A673 (cell line): ENCODE measurements at regions of chr9 and their contacts with region 1.

Region 1: DNA sequence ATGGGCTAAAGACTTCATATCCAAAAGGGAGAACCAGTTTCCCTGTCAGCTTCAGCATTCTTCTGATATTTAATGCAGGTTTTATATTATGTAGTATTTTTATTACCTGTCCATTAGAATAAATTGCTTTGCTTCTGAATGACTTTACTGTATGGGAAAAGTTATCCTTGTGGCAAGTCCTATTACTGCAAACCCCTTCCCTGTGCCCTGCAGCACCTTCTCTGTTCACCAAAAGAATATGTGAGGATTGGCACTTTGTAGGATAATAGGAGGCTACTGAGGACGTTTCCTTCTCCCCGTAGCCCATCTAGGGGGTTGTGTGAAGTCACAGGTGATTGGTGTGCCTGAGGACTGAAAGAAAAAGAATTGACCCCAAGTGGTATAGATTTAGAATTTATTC is 296.1 kb downstream of the KDM4C start:
- DNase-seq: no peak
- H3K4me3 ChIP-seq: no peak overlapping the region
- H3K27ac ChIP-seq: no peak overlapping the region
- H3K4me1 ChIP-seq: peaks cover 3% of the 10 kb centered on the region
- H3K27me3 ChIP-seq: no peaks in the 10 kb centered on the region
- CTCF ChIP-seq: no peak; the same call in 1 of the 2 replicates

Region 2: DNA sequence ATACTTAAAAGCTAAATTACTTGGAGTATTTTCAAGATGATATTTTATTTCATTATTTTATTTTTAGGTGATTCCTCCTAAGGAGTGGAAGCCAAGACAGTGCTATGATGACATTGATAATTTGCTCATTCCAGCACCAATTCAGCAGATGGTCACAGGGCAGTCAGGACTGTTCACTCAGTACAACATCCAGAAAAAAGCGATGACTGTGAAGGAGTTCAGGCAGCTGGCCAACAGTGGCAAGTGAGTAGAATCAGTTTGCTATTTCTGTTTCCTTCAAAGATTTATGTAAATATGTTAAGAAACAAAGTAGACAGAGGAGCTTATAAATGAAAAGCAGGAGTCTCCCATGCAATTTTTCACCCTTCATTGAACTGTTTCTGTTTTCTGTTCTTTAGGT is 248.4 kb before region 1 on chr9:
- CTCF ChIA-PET with region 1: no interaction called
- POLR2A ChIA-PET with region 1: no interaction called
- intact Hi-C with region 1: no loop called
- DNase-seq: no peak
- H3K4me3 ChIP-seq: no peak overlapping the region
- H3K27ac ChIP-seq: no peak overlapping the region
- H3K4me1 ChIP-seq: no peaks in the 10 kb centered on the region
- H3K27me3 ChIP-seq: no peaks in the 10 kb centered on the region
- CTCF ChIP-seq: no peak

Region 3: GRCh38 chr9:6827439-6827838 is 226.5 kb before region 1 on chr9:
- CTCF ChIA-PET with region 1: no interaction called
- POLR2A ChIA-PET with region 1: no interaction called
- intact Hi-C with region 1: loop called (anchors 5 kb)
- DNase-seq: peak; percentile 69
- H3K4me3 ChIP-seq: no peak overlapping the region
- H3K27ac ChIP-seq: no peak overlapping the region
- H3K4me1 ChIP-seq: no peaks in the 10 kb centered on the region
- H3K27me3 ChIP-seq: no peaks in the 10 kb centered on the region
- CTCF ChIP-seq: peak; percentile 76

Region 4: GRCh38 chr9:7405924-7406604 is 352.2 kb after region 1 on chr9:
- CTCF ChIA-PET with region 1: interaction called, 4 read pairs
- POLR2A ChIA-PET with region 1: no interaction called
- intact Hi-C with region 1: loop called (anchors 2 kb)
- DNase-seq: no peak
- H3K4me3 ChIP-seq: no peak overlapping the region
- H3K27ac ChIP-seq: no peak overlapping the region
- H3K4me1 ChIP-seq: no peaks in the 10 kb centered on the region
- H3K27me3 ChIP-seq: no peaks in the 10 kb centered on the region
- CTCF ChIP-seq: no peak

Region 5: DNA sequence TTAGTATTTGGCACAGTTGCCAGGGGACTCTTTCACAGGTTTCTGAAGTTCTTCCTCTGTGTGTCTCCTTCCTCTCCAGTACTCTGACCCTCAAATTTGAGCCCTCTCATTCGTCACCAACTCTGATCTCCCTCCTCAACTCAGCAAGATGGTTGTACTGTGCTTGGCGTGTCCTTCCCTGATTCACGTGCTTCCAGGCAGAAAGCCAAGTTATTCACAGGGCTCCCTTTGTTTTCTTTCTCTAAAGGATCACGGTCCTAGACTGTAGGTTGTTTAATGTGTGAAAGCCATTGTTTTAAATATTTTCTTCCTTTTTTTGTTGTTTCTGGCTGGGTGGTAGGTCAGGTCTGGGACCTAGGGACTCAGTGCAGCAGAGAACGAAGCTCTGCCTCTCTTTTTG is 602.7 kb after region 1 on chr9:
- CTCF ChIA-PET with region 1: no interaction called
- POLR2A ChIA-PET with region 1: no interaction called
- intact Hi-C with region 1: loop called (anchors 5 kb)
- DNase-seq: peak; percentile 4
- H3K4me3 ChIP-seq: no peak overlapping the region
- H3K27ac ChIP-seq: no peak overlapping the region
- H3K4me1 ChIP-seq: no peaks in the 10 kb centered on the region
- H3K27me3 ChIP-seq: no peaks in the 10 kb centered on the region
- CTCF ChIP-seq: no peak